Heart left ventricle (tissue), 16 donors: ENCODE measurements at regions of chr18 and their contacts with region 1.

Region 1: DNA sequence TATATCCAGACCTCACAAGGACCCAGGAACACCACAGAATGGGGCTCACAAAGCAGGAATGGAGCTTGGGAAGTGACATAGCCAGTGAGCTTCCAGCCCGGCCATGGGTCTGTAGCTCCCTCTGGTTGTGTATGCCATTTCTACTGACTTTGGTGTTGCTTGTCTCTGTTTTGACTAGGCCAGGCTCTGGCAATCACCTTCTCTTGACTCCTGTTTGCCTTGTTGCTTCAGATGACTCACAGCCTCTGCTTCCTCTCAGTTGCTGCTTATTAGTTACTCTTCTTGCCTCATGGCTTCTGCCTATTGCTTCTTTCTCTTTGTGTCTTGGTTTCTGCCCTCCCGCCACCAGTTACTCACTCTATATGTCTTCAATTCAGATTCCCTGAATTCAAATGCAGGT is 15.8 kb upstream of the IER3IP1 start:
- DNase-seq: no peak
- ATAC-seq: no peak
- H3K4me3 ChIP-seq: no peak overlapping the region
- H3K27ac ChIP-seq: no peak overlapping the region
- H3K4me1 ChIP-seq: no peaks in the 10 kb centered on the region
- H3K27me3 ChIP-seq: peaks cover 0 to 29% (median 0%) of the 10 kb centered on the region in 9 donors
- CTCF ChIP-seq: no peak
- POLR2A ChIP-seq: no peak

Region 2: GRCh38 chr18:47120428-47120827 is 71.5 kb before region 1 on chr18:
- intact Hi-C with region 1: loop called in 1 of 10 experiments (anchors 5 kb)
- DNase-seq: no peak
- ATAC-seq: no peak
- H3K4me3 ChIP-seq: no peak overlapping the region
- H3K27ac ChIP-seq: no peak overlapping the region
- H3K4me1 ChIP-seq: no peaks in the 10 kb centered on the region
- H3K27me3 ChIP-seq: no peaks in the 10 kb centered on the region
- CTCF ChIP-seq: no peak
- POLR2A ChIP-seq: no peak

Region 3: DNA sequence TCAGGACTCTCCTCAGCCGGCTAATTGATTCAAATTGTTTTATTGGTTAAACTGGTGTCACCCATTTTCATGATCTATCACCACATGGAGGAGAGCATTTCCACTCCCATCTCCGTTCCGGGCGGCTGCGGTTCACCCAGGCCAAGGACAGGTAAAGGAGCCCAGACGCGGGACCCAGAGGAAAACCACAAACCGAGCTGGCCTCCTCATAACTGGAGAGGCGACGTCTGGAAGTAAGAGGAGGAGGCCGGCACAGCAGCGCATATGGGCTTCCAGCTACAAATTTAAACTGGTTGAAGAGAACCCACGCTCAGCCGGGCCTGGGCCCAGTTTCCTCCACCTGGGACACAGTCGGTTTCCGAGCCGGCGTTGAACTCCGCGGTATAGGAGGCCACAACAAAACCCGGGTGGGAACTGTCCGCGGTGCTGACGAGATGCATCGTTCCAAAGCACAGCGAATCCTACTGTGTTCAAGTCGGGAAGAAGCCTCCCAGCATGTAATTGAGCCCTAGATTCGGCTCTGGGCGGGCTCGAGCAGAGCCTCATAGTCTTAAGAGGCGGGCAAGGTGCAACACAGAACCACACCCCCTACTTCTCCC is 62.5 kb after region 1 on chr18:
- intact Hi-C with region 1: no loop called
- DNase-seq: peak in 3 of 5 donors; percentile 42 to 69 (median 55)
- ATAC-seq: peak in 3 of 4 donors; percentile 50 to 63 (median 51)
- H3K4me3 ChIP-seq: no peak overlapping the region
- H3K27ac ChIP-seq: no peak overlapping the region
- H3K4me1 ChIP-seq: peaks cover 0 to 6% (median 0%) of the 10 kb centered on the region in 12 donors
- H3K27me3 ChIP-seq: peaks cover 32 to 100% (median 77%) of the 10 kb centered on the region in 9 donors
- CTCF ChIP-seq: no peak
- POLR2A ChIP-seq: no peak